A549 (cell line): ENCODE measurements at regions of chr7 and their contacts with region 1.

Region 1: DNA sequence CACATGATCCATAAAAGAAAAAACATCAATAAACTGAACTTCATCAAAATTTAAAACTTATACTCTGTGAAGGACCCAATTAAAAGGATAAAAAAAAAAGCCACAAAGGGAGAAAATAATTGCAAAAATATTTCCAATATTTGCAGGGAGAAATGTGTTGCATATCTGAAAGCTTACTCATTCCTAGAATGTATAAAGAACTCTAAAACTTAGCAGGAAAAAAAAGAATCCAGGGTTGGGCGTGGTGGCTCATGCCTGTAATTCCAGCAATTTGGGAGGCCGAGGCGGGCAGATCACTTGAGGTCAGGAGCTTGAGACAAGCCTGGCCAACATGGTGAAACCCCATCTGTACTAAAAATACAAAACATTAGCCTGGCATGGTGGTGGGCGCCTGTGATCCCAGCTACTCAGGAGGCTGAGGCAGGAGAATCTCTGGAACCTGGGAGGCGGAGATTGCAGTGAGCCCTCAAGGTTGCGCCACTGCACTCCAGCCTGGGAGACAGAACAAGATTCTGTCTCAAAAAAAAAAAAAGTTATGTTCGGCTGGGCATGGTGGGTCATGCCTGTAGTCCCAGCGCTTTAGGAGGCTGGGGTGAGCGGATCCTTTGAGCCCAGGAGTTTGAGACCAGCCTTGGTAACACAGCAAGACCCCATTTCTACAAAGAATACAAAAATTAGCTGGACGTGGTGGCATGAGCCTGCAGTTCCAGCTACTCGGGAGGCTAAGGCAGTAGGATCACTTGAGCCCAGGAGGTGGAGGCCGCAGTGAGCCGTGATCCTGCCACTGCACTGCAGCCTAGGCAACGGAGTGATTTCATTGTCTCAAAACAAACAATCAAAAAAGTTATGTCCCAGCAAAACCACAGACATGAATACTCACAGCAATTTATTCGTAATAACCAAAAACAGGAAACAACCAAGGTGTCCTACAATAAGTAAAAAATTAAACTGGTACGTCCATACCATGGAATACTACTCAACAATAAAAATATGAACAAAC is 11.3 kb upstream of the CYTH3 start:
- DNase-seq: peak; percentile 16 to 87
- ATAC-seq: peak; percentile 78 to 83
- H3K4me3 ChIP-seq: no peak overlapping the region; the same call in 2 of the 3 replicates
- H3K27ac ChIP-seq: peak overlapping the region; percentile 98
- H3K4me1 ChIP-seq: peaks cover 49% of the 10 kb centered on the region
- CTCF ChIP-seq: no peak
- EP300 ChIP-seq: peak; percentile 31 to 79; a peak in 3 of 5 replicates
- POLR2A ChIP-seq: no peak
- RAD21 ChIP-seq: no peak

Region 2: GRCh38 chr7:6306471-6306870 is 22.8 kb after region 1 on chr7:
- CTCF ChIA-PET with region 1: interaction called, 3 read pairs
- POLR2A ChIA-PET with region 1: interaction called, 19 read pairs
- DNase-seq: peak; percentile 72 to 86
- ATAC-seq: peak; percentile 90 to 99
- H3K4me3 ChIP-seq: no peak overlapping the region
- H3K27ac ChIP-seq: peak overlapping the region; percentile 69 to 86
- H3K4me1 ChIP-seq: peaks cover 53% of the 10 kb centered on the region
- CTCF ChIP-seq: no peak
- EP300 ChIP-seq: peak; percentile 65 to 73; a peak in 2 of 5 replicates
- POLR2A ChIP-seq: no peak
- RAD21 ChIP-seq: peak in 1 of 2 experiments; percentile 13; a peak in 3 of 5 replicates